Adrenal gland (tissue), 19 donors: ENCODE measurements at regions of chr17 and their contacts with region 1.

Region 1: DNA sequence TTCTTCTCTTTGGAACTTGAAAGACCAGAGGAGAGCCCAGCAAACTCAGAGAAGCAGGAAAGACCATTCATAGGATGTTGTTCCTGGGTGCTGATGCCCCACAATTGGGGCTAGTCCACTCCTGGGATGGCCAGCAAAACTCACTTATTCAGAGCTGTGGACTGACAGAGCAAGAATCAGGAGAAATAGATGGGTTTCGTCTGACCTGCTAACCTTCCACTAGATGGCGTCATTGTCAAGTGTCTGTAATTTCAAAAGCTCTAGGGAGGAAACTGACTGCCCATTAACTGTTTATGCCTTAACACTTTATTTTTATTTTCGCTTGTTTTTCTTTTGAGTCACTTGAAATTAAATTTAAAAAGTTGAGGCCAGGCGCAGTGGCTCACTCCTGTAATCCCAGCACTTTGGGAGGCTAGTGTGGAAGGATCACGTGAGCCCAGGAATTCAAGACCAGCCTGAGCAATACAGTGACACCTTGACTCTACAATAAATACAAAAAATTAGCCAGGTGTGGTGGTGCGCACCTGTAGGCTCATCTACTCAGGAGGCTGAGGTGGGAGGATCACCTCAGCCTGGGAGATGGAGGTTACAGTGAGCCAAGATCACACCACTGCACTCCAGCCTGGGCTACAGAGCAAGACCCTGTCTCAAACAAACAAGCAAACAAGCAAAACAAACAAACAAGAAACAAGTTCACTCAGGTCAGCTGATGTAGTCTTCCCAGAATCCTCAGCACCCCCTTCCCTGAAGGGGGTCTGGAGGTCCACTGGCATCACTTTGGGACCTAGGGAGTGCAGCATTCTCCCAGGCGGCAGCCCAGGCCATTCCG is 28.6 kb upstream of the MILR1 start:
- DNase-seq: peak in 3 of 7 donors; percentile 29 to 58 (median 39)
- H3K4me3 ChIP-seq: no peak overlapping the region
- H3K27ac ChIP-seq: no peak overlapping the region
- H3K4me1 ChIP-seq: no peaks in the 10 kb centered on the region
- H3K27me3 ChIP-seq: no peaks in the 10 kb centered on the region
- CTCF ChIP-seq: peak; percentile 67 to 86 (median 81)
- POLR2A ChIP-seq: no peak

Region 2: DNA sequence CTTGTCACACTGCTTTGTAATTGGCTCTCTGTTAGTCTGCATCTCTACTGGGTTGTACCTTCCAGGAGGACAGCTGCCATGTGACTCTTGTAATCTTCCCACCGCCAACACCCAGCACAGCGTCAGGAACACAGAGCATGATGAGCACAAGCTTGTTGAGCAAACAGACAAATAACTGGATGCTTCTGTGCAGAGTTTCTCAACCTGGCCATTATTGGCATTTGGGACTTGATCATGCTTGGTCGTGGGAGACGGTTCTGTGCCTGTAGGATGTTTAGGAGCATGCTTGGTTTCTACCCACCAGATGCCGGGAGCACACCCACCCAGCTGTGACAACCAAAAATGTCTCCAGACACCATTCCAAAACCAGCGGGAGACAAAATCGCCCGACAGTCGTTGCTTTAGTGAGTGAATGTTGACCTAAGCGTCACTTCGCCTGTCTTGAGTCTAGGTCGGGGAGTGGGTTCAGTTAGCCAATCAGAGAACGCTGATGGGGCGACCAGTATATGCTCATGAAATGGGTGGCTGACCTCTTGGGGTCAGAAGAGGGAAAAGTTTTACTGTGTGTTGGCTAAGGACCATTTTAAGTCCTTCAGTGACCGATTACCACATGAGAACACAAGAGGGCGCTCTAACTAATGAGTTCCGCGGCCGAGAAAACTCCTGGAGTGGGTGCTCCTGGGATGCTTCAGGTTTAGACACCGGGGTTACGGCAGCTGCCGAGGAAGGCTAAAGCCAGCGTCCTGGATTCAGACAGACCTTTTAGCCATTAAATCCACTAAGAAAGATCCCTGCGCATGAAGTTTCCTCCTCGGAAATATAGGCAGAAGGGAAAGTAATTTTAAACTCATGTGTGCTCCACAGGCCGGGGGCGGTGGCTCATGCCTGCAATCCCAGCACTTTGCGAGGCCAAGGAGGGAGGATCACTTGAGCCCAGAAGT is 99.5 kb before region 1 on chr17:
- intact Hi-C with region 1: loop called (anchors 2 to 5 kb)
- DNase-seq: peak; percentile 57 to 85 (median 71)
- H3K4me3 ChIP-seq: no peak overlapping the region
- H3K27ac ChIP-seq: no peak overlapping the region
- H3K4me1 ChIP-seq: peaks cover 0 to 13% of the 10 kb centered on the region in 2 donors
- H3K27me3 ChIP-seq: no peaks in the 10 kb centered on the region
- CTCF ChIP-seq: peak; percentile 72 to 85 (median 78)
- POLR2A ChIP-seq: no peak

Region 3: DNA sequence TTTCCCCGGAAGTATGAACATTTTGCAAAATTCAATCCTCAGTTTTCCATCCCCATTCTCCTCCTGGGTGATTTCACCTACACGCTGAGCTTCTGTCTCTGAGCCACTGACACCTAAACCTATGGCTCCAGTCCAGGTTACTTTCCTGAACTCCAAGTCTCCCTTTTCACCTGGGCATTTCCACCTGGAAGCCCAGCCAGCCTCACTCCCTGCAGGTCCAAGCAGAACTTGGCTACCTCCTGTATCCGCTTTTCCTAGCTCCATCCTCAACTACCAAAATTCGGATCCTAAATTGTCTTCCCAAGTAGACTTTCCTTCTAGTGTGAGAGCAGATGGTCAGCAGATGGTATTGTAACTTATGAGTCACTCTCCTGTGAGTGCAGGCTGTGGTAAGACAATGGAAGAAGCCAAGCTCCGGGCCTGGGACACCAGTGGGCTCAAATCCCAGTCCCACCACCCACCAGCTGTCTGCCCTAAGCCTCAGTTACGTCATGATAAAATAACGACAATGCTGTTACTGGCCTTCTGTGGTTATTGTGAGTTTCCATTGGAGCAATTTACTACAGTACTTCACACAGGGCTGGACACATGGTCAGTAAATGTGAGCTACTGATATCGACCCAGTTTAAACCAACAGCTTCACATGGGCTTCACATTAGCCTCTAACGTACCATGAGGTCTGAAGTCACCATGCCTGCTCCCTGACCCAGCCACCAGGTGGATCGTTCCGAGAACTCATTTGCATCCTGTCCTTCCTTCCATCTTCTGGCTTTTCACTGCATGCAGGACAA is 63.0 kb before region 1 on chr17:
- intact Hi-C with region 1: no loop called
- DNase-seq: peak in 1 of 7 donors; percentile 41
- H3K4me3 ChIP-seq: no peak overlapping the region
- H3K27ac ChIP-seq: no peak overlapping the region
- H3K4me1 ChIP-seq: peaks cover 0 to 4% of the 10 kb centered on the region in 2 donors
- H3K27me3 ChIP-seq: no peaks in the 10 kb centered on the region
- CTCF ChIP-seq: no peak
- POLR2A ChIP-seq: no peak

Region 4: DNA sequence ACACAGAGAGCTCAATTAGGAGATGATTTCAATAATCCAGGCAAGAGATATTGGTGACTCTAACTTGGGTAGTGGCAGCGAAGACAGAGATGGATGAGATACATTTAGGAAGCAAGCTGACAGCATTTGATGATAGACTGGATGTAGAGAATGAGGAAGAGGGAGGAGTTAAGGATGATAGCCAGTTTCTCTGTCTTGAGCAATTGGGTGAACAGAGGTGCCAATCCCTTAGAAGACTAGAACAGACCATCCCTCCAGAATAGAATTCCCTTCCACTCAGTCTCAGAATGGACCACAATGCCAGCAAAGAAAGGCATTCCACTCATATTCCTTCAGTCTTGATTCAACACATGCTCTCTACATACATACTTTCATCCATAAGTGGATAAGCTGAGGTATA is 59.3 kb after region 1 on chr17:
- intact Hi-C with region 1: loop called (anchors 10 kb)
- DNase-seq: no peak
- H3K4me3 ChIP-seq: no peak overlapping the region
- H3K27ac ChIP-seq: no peak overlapping the region
- H3K4me1 ChIP-seq: no peaks in the 10 kb centered on the region
- H3K27me3 ChIP-seq: no peaks in the 10 kb centered on the region
- CTCF ChIP-seq: no peak
- POLR2A ChIP-seq: no peak